Activated CD4-positive, alpha-beta memory T cell treated with anti-CD3 and anti-CD28 coated beads for 36 hours (primary cell): ENCODE measurements at regions of chr2 and their contacts with region 1.

Region 1: DNA sequence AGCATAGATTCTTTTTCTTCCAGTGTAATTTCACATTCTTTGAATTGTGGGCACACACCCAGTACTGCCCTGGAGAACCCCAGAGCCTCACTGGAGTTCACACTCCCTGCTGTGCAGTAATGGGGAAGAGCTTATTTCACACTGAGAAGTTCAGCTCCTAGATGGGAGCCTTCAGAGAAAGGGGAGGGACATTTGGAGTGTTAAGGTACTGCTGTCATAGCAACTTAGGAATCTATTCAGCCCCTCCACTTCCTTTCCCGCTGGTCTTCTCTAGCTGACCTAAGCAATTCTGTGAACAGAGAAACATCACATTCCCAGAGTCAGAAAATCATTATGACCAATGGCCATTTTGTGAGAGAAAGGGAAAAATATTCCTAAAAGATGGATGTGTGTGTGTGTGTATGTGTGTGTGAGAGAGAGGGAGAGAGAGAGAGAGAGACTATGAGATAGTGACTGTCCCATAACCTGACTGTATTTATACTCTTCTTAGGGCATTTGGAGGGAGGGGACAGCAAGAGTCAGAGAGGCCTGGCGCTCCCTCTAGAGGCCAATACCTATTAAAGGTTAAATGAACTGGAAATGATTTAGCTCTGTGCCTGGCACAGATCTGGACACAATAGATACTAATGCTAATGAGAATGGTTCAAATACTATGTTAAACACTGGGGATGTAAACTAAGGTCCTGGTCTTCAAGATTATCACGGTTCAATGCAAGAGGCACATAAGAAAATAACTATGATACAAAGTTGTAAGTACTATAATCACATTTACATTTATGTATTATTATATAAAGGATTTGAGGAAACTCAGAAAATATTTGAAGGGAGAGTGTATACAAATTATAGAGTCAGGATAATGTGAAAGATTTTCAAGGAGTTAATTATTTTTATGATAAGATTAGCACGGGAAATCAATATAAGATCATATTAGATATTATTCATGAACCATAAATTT is 41.5 kb upstream of the RPE start:
- DNase-seq: peak; percentile 48
- H3K4me3 Mint-ChIP-seq: no peak overlapping the region
- H3K27ac Mint-ChIP-seq: no peak overlapping the region
- H3K4me1 Mint-ChIP-seq: no peaks in the 10 kb centered on the region
- H3K27me3 Mint-ChIP-seq: no peaks in the 10 kb centered on the region

Region 2: DNA sequence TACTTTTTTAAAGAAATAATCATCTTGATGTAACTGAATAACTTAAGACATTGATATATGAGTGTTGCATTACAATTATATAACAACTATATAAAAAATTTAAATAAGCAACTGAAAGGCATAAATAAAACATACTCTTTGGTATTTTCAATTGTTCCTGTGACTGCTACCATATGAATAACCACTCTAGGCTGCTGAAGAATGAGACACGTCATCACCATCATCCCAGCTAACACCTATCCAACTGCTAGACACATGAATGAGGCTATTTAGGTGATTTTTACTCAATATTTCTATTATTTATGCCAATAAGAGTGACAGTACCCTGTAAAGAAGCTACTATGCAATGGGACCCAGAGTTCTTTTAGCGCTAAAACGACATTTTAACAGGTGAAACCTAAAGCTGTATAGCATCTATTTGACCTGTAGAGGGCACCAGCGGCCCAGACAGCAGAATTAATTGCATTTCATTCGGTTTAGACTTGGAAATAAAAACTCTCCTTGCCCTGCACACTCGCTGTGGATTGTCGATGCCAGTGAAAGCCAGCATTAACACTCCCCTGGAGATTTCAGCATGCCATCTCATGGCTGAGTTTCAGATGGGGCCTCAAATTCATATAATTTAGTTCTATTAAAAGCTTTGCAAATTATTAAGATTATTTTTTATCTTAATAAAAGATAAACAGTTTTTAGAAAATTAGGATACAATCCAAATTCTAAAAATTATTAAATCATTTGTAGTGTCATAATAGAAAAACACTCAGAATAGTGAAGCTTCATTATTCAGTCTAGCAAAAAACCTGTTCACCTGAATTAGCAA is 626.5 kb before region 1 on chr2:
- CTCF ChIA-PET with region 1: interaction called, 10 read pairs
- POLR2A ChIA-PET with region 1: no interaction called
- intact Hi-C with region 1: loop called (anchors 1 kb)
- DNase-seq: peak; percentile 48
- H3K4me3 Mint-ChIP-seq: no peak overlapping the region
- H3K27ac Mint-ChIP-seq: no peak overlapping the region
- H3K4me1 Mint-ChIP-seq: no peaks in the 10 kb centered on the region
- H3K27me3 Mint-ChIP-seq: no peaks in the 10 kb centered on the region

Region 3: GRCh38 chr2:209423562-209424198 is 537.3 kb before region 1 on chr2 and contains the start of gene MAP2:
- CTCF ChIA-PET with region 1: no interaction called
- POLR2A ChIA-PET with region 1: no interaction called
- intact Hi-C with region 1: loop called (anchors 2 kb)
- DNase-seq: peak; percentile 77
- H3K4me3 Mint-ChIP-seq: peak within 1 kb of the TSS; percentile 57
- H3K27ac Mint-ChIP-seq: no peak within 1 kb of the TSS
- H3K4me1 Mint-ChIP-seq: peaks cover 10% of the 10 kb centered on the region
- H3K27me3 Mint-ChIP-seq: peaks cover 25% of the 10 kb centered on the region
- total RNA-seq, gene MAP2: 0.07 to 0.27 TPM

Region 4: DNA sequence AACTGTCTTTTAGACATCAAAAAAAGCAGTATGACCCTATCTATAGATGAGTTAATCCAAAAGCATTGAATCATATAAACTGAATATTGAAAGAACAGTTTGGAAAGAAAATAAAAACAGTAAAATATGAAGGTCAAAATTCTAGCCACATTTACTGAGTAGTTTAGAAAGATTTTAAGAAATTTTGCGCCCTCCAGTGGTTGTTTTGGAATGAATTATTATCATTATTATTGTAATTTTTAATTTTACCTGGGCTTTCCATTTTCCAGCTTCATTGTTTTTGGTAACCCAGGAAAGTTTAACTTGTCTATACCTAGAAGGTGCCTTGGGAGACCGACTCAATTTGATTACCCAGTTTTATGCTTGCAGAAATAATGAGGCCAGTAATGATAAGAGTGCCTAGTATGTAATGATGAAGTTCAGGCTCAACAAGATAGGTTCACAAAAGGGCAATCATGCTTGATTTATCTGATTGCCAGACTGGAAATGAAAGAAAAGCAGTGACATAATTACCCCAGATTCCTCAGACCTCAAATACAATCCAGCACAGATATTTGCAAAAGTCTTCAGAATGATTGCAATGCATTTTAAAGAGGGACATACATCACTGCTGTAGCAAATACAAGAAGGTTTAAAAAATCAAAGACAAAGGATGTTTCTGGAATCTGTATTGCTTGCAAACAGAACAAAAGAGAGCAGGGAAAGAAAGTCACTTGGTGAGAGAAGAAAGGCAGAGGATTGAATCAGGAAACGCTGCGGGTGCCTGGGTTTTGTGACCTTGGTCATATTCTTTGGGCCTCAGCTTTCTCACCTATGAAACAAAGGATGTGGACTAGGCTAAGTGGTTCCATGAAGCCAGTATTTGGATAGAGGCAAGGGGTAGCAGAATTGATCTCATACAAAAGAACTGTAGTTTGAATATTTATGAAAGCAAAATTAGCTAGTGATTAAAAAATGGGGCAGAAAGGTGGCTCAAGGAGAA is 383.3 kb before region 1 on chr2:
- CTCF ChIA-PET with region 1: no interaction called
- POLR2A ChIA-PET with region 1: no interaction called
- intact Hi-C with region 1: loop called (anchors 10 kb)
- DNase-seq: no peak
- H3K4me3 Mint-ChIP-seq: no peak overlapping the region
- H3K27ac Mint-ChIP-seq: no peak overlapping the region
- H3K4me1 Mint-ChIP-seq: no peaks in the 10 kb centered on the region
- H3K27me3 Mint-ChIP-seq: no peaks in the 10 kb centered on the region

Region 5: DNA sequence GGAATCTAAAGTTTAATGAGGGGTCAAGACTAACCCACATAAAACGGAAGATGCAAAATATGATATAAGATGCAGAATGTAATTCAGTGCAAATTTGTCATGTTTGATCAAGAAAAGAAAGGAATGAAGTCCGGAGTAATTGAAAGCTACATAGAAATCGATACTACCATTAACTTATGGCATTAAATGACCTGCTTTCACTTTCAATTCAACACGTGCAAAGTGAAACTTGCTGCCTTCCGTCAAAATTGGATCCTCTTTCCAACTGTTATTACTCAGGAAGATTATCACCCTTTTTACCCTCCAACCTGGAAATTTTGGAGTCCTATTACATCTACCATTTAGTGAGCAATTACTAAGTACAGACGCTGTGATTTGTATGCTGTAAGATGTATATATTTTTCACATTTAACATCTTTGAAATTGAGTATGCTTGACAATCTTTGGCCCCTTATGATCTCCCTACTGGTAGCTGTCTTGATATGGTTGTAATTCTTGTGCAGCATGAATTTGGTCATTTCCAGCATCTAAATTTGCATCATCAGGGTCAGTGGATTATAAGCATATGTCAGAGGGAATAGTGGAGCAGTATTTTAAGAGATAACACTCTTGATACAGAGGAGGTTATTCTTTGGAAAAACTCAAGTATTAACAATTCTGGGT is 170.8 kb before region 1 on chr2:
- CTCF ChIA-PET with region 1: no interaction called
- POLR2A ChIA-PET with region 1: no interaction called
- intact Hi-C with region 1: loop called (anchors 10 kb)
- DNase-seq: no peak
- H3K4me3 Mint-ChIP-seq: peak overlapping the region; percentile 25
- H3K27ac Mint-ChIP-seq: no peak overlapping the region
- H3K4me1 Mint-ChIP-seq: peaks cover 18% of the 10 kb centered on the region
- H3K27me3 Mint-ChIP-seq: no peaks in the 10 kb centered on the region

Region 6: DNA sequence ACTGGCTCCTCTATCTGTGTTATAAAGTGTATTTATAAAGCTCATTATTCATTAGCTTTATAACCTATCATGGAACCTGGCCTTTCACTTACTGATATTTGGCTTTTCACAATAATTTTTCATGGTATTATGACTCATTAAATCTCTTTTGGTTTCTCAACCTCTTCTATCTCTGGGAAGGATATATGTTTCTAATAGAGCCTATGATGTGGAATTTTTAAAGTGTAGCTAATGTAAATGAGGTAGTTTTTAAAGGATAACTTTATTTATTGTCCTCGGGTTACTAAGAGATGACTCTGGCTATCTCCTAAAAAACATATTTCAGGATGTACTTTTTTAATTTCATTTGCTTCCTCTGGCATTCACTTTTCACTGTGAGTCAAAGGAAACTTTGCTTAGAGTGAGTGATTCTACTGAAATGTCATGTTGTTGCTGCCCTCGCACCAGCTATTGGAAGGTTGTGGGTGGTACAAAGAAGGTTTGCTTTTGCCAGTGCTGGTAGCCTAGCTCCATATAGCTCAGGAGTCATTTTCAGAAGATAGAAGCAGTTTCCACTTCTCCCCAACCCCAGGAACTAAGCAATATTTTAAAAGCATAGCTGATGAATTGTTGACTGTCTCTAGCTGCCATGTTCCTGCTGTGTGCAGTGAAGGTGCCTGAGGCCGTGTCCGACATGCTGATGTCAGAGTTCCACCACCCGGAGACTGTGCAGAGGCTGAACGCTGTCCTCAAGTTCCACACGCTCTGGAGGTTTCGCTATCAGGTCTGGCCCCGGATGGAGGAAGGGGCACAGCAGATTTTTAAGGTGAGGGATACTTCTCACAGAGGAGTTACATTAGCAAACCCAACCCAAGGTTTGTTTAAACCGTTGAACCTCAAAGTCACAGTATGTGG is 43.6 kb before region 1 on chr2:
- CTCF ChIA-PET with region 1: no interaction called
- POLR2A ChIA-PET with region 1: no interaction called
- intact Hi-C with region 1: no loop called
- DNase-seq: no peak
- H3K4me3 Mint-ChIP-seq: no peak overlapping the region
- H3K27ac Mint-ChIP-seq: no peak overlapping the region
- H3K4me1 Mint-ChIP-seq: no peaks in the 10 kb centered on the region
- H3K27me3 Mint-ChIP-seq: no peaks in the 10 kb centered on the region

Region 7: DNA sequence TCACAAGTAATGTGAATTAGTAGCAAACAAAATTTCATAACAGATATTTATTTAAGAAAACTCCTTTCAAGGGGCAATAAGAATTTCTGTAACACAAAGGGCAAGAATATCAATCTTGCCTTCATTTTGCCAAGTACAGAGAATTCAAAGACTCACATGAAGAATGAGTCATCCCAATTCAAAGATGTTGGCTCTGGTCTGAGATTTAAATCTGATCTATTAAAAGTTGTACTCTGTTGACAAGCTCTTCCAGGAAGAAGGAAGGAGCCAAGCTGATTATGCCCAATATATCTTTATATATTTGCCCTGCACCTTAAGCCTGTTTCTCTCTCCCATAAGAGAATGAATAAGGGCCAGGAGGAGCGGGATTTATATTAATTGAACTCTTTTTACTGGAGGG is 14.4 kb before region 1 on chr2:
- CTCF ChIA-PET with region 1: interaction called, 10 read pairs
- POLR2A ChIA-PET with region 1: no interaction called
- intact Hi-C with region 1: no loop called
- DNase-seq: no peak
- H3K4me3 Mint-ChIP-seq: no peak overlapping the region
- H3K27ac Mint-ChIP-seq: no peak overlapping the region
- H3K4me1 Mint-ChIP-seq: no peaks in the 10 kb centered on the region
- H3K27me3 Mint-ChIP-seq: peaks cover 5% of the 10 kb centered on the region